ENCODE measurements at regions of chr2 and their contacts with region 1.

Region 1: GRCh38 chr2:208781166-208781565 is 374.6 kb downstream of the PTH2R start:
- DNase-seq: no peak
- ATAC-seq: no peak
- H3K4me3 ChIP-seq: no peak overlapping the region
- H3K27ac ChIP-seq: no peak overlapping the region
- H3K4me1 ChIP-seq: no peaks in the 10 kb centered on the region
- H3K27me3 ChIP-seq: no peaks in the 10 kb centered on the region
- CTCF ChIP-seq: no peak
- POLR2A ChIP-seq: no peak
- RAD21 ChIP-seq: no peak

Region 2: GRCh38 chr2:208757364-208757763 is 23.8 kb before region 1 on chr2:
- CTCF ChIA-PET with region 1: no interaction called
- POLR2A ChIA-PET with region 1: no interaction called
- dilution Hi-C with region 1: no loop called
- in situ Hi-C with region 1: no loop called
- intact Hi-C with region 1: loop called (anchors 2 kb)
- DNase-seq: no peak
- ATAC-seq: no peak
- H3K4me3 ChIP-seq: no peak overlapping the region
- H3K27ac ChIP-seq: no peak overlapping the region
- H3K4me1 ChIP-seq: no peaks in the 10 kb centered on the region
- H3K27me3 ChIP-seq: no peaks in the 10 kb centered on the region
- CTCF ChIP-seq: no peak
- POLR2A ChIP-seq: no peak
- RAD21 ChIP-seq: no peak

Region 3: GRCh38 chr2:209269024-209269423 is 487.9 kb after region 1 on chr2:
- CTCF ChIA-PET with region 1: no interaction called
- POLR2A ChIA-PET with region 1: no interaction called
- dilution Hi-C with region 1: no loop called
- in situ Hi-C with region 1: no loop called
- intact Hi-C with region 1: no loop called
- DNase-seq: no peak
- ATAC-seq: no peak
- H3K4me3 ChIP-seq: no peak overlapping the region
- H3K27ac ChIP-seq: no peak overlapping the region
- H3K4me1 ChIP-seq: no peaks in the 10 kb centered on the region
- H3K27me3 ChIP-seq: no peaks in the 10 kb centered on the region
- CTCF ChIP-seq: no peak
- POLR2A ChIP-seq: no peak
- RAD21 ChIP-seq: no peak

Region 4: DNA sequence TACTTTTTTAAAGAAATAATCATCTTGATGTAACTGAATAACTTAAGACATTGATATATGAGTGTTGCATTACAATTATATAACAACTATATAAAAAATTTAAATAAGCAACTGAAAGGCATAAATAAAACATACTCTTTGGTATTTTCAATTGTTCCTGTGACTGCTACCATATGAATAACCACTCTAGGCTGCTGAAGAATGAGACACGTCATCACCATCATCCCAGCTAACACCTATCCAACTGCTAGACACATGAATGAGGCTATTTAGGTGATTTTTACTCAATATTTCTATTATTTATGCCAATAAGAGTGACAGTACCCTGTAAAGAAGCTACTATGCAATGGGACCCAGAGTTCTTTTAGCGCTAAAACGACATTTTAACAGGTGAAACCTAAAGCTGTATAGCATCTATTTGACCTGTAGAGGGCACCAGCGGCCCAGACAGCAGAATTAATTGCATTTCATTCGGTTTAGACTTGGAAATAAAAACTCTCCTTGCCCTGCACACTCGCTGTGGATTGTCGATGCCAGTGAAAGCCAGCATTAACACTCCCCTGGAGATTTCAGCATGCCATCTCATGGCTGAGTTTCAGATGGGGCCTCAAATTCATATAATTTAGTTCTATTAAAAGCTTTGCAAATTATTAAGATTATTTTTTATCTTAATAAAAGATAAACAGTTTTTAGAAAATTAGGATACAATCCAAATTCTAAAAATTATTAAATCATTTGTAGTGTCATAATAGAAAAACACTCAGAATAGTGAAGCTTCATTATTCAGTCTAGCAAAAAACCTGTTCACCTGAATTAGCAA is 553.2 kb after region 1 on chr2:
- CTCF ChIA-PET with region 1: no interaction called
- POLR2A ChIA-PET with region 1: no interaction called
- dilution Hi-C with region 1: no loop called
- in situ Hi-C with region 1: no loop called
- intact Hi-C with region 1: no loop called
- DNase-seq: peak; percentile 37
- ATAC-seq: peak; percentile 73; the same call in 1 of the 2 replicates
- H3K4me3 ChIP-seq: no peak overlapping the region
- H3K27ac ChIP-seq: no peak overlapping the region
- H3K4me1 ChIP-seq: no peaks in the 10 kb centered on the region
- H3K27me3 ChIP-seq: no peaks in the 10 kb centered on the region
- CTCF ChIP-seq: peak; percentile 86
- POLR2A ChIP-seq: no peak
- RAD21 ChIP-seq: peak; percentile 88

Measured in IMR-90 (cell line).